ENCODE measurements at regions of chr1 and their contacts with region 1.

Region 1: GRCh38 chr1:53326088-53326597 is 1.7 kb downstream of the LRP8 start:
- DNase-seq: peak; percentile 96
- H3K4me3 Mint-ChIP-seq: peak overlapping the region; percentile 95
- H3K27ac Mint-ChIP-seq: peak overlapping the region; percentile 94
- H3K4me1 Mint-ChIP-seq: peaks cover 18% of the 10 kb centered on the region
- H3K27me3 Mint-ChIP-seq: no peaks in the 10 kb centered on the region

Region 2: DNA sequence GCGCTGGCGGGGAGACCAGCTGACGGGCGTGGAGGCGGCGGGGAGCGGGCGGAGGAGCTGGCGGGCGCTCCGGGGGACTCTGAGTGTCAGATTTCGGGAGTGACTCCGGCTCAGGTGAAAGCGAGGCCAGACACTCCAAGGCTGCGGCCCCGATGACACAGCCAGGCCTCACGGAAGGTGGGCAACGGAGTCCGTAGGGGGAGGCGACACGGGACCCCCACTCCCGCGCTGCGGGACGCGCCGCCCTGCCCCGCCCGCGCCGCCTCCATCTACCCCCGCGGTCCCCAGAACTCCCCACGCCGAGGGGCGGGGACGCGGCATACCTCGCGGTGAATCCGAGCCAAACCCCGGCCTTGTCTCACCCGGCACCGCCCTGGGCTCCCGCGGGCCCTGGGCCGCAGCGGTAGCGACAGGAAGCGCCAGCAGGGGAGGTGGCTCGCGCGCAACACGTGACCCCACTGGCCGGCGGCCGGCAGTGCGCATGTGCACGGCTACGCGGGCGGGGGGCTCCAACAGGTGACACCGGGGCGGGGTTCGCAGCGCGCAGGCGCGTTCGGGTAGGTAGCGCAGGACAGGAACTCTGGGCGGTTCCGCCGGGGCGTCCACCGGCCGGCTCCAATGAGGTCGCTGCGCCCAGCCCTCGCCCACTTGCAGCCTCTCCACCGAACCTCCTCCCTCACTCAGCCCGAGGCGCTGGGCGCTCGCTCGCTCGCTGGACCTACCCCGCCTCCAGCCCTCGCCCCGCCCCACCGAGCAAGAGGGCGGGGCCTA is 960.2 kb before region 1 on chr1 and contains the start of gene CC2D1B:
- CTCF ChIA-PET with region 1: no interaction called
- intact Hi-C with region 1: loop called (anchors 2 kb)
- DNase-seq: peak; percentile 99
- H3K4me3 Mint-ChIP-seq: peak within 1 kb of the TSS; percentile 97
- H3K27ac Mint-ChIP-seq: peak within 1 kb of the TSS; percentile 88
- H3K4me1 Mint-ChIP-seq: peaks cover 46% of the 10 kb centered on the region
- H3K27me3 Mint-ChIP-seq: no peaks in the 10 kb centered on the region
- total RNA-seq, gene CC2D1B: 18.4 to 21.8 TPM

Region 3: DNA sequence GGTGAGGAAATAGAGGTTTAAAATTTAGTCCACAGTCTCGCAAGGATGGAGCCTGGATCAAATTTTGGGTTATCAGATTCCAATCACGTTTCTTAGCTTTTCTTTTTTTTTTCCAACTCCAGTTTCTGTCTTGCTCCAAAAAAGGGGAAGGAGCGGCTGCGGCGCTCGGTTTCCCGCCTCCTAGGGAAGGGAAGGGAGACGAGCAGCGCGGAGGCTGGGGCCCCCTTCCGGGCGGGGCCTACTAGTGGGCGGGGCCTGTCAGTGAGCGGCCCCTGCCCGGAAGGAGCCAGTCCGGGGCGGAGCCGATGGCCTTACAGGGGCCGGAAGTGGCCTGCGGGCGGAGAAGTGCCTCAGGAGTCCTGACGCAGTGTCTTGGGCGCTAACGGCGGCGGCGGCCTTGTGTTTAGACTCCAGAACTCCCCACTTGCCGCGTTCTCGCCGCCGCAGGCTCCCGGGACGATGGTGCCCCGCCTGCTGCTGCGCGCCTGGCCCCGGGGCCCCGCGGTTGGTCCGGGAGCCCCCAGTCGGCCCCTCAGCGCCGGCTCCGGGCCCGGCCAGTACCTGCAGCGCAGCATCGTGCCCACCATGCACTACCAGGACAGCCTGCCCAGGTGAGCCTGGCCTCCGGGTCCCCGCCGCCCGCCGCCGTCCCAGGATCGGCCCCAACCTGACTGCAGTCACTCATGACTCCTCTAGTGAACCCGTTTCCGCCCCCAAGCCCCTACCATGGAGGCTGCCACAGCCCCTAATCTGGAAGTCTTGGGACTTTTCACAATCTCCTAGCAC is 129.5 kb before region 1 on chr1 and contains the start of gene CPT2:
- CTCF ChIA-PET with region 1: no interaction called
- intact Hi-C with region 1: loop called (anchors 1 kb)
- DNase-seq: peak; percentile 94
- H3K4me3 Mint-ChIP-seq: peak within 1 kb of the TSS; percentile 96
- H3K27ac Mint-ChIP-seq: peak within 1 kb of the TSS; percentile 97
- H3K4me1 Mint-ChIP-seq: peaks cover 21% of the 10 kb centered on the region
- H3K27me3 Mint-ChIP-seq: no peaks in the 10 kb centered on the region
- total RNA-seq, gene CPT2: 11.3 to 13.8 TPM

Region 4: DNA sequence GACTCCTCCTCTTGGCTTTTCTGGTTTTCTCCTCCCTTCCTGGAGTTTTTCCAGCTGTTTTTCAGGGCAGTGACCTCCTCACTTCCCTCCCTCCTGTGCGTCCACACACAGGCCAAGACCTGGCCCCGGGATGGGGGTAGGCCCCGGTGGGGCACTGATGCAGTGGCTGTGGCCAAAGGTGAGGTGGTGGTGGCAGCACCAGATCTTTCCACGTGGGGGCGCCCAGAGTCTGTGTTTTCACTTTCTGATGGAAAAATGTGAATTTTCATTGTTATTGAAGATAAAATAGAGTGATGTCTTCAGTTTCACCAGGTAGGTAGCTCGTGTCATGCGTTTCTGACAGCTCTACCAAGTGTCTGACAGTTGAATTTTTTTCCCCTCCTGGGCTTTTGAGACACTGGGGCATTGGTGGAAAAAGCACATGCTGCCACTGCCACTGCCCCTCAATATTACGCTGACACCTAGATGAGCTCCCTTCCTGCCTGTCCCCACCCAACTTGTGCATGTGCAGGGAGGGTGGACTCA is 47.9 kb before region 1 on chr1:
- CTCF ChIA-PET with region 1: interaction called, 9 read pairs
- intact Hi-C with region 1: loop called (anchors 5 kb)
- DNase-seq: peak; percentile 79
- H3K4me3 Mint-ChIP-seq: no peak overlapping the region
- H3K27ac Mint-ChIP-seq: no peak overlapping the region
- H3K4me1 Mint-ChIP-seq: peaks cover 2% of the 10 kb centered on the region
- H3K27me3 Mint-ChIP-seq: no peaks in the 10 kb centered on the region

Region 5: GRCh38 chr1:53367503-53368304 is 41.6 kb after region 1 on chr1:
- CTCF ChIA-PET with region 1: no interaction called
- intact Hi-C with region 1: loop called (anchors 2 kb)
- DNase-seq: peak; percentile 69
- H3K4me3 Mint-ChIP-seq: peak overlapping the region; percentile 71
- H3K27ac Mint-ChIP-seq: peak overlapping the region; percentile 54
- H3K4me1 Mint-ChIP-seq: peaks cover 19% of the 10 kb centered on the region
- H3K27me3 Mint-ChIP-seq: no peaks in the 10 kb centered on the region

Region 6: GRCh38 chr1:53837924-53838652 is 511.9 kb after region 1 on chr1 and contains the start of gene NDC1:
- CTCF ChIA-PET with region 1: no interaction called
- intact Hi-C with region 1: loop called (anchors 1 kb)
- DNase-seq: peak; percentile 92
- H3K4me3 Mint-ChIP-seq: peak within 1 kb of the TSS; percentile 100
- H3K27ac Mint-ChIP-seq: peak within 1 kb of the TSS; percentile 96
- H3K4me1 Mint-ChIP-seq: peaks cover 27% of the 10 kb centered on the region
- H3K27me3 Mint-ChIP-seq: no peaks in the 10 kb centered on the region
- total RNA-seq, gene NDC1: 25.9 to 27.9 TPM

Region 7: DNA sequence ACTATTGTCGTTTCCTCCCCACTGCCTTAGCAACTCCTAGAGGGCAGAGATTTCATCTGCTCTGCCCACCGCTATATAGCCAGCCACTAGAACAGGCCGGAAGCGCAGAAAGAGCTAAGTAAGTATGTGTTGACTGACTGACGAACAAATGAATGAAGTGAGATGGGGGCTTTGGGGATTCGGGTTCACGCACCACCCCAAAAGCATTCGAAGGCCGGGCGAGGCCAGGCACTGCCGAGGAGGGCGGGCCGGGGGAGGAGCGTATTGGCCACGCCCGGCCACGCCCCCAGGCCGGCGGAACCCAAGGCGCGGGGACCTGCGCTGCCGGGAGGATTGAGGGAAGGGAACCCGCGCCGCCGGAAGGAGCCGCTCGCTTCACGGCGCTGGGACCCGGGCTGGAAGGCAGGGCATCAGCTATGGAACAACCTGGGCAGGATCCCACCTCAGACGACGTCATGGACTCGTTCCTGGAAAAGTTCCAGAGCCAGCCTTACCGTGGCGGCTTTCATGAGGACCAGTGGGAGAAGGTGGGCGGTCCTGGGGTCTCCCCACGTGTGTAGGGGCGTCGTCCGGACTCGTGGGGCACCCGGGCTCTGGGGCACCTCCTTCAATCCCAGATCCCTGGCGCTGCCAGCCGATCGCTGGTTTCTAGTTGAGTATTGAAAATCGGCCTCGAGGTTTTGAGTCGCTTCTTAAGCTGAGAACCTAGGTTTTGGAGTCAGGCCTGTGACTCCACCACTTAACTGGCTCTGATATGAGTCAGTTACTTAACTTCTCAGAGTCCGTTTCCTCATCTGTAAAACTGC is 1389.6 kb after region 1 on chr1 and contains the start of gene TTC4:
- CTCF ChIA-PET with region 1: no interaction called
- intact Hi-C with region 1: loop called (anchors 10 kb)
- DNase-seq: peak; percentile 84
- H3K4me3 Mint-ChIP-seq: peak within 1 kb of the TSS; percentile 92
- H3K27ac Mint-ChIP-seq: peak within 1 kb of the TSS; percentile 92
- H3K4me1 Mint-ChIP-seq: peaks cover 31% of the 10 kb centered on the region
- H3K27me3 Mint-ChIP-seq: no peaks in the 10 kb centered on the region
- total RNA-seq, gene TTC4: 26.3 to 30.2 TPM

Measured in activated naive CD4-positive, alpha-beta T cell treated with anti-CD3 and anti-CD28 coated beads for 36 hours (primary cell).